Activated CD4-positive, alpha-beta memory T cell treated with anti-CD3 and anti-CD28 coated beads for 36 hours (primary cell): ENCODE measurements at regions of chr5 and their contacts with region 1.

Region 1: GRCh38 chr5:150026682-150027172 is 26.2 kb downstream of the HMGXB3 start:
- DNase-seq: no peak
- H3K4me3 Mint-ChIP-seq: no peak overlapping the region
- H3K27ac Mint-ChIP-seq: no peak overlapping the region
- H3K4me1 Mint-ChIP-seq: peaks cover 4% of the 10 kb centered on the region
- H3K27me3 Mint-ChIP-seq: no peaks in the 10 kb centered on the region

Region 2: GRCh38 chr5:149932445-149933350 is 94.0 kb before region 1 on chr5:
- CTCF ChIA-PET with region 1: no interaction called
- POLR2A ChIA-PET with region 1: no interaction called
- intact Hi-C with region 1: no loop called
- DNase-seq: no peak
- H3K4me3 Mint-ChIP-seq: no peak overlapping the region
- H3K27ac Mint-ChIP-seq: no peak overlapping the region
- H3K4me1 Mint-ChIP-seq: peaks cover 5% of the 10 kb centered on the region
- H3K27me3 Mint-ChIP-seq: peaks cover 21% of the 10 kb centered on the region

Region 3: GRCh38 chr5:150044329-150044681 is 17.6 kb after region 1 on chr5:
- CTCF ChIA-PET with region 1: interaction called, 3 read pairs
- POLR2A ChIA-PET with region 1: no interaction called
- intact Hi-C with region 1: loop called (anchors 1 kb)
- DNase-seq: no peak
- H3K4me3 Mint-ChIP-seq: no peak overlapping the region
- H3K27ac Mint-ChIP-seq: no peak overlapping the region
- H3K4me1 Mint-ChIP-seq: peaks cover 6% of the 10 kb centered on the region
- H3K27me3 Mint-ChIP-seq: no peaks in the 10 kb centered on the region